SK-N-SH (cell line): ENCODE measurements at regions of chr7 and their contacts with region 1.

Region 1: DNA sequence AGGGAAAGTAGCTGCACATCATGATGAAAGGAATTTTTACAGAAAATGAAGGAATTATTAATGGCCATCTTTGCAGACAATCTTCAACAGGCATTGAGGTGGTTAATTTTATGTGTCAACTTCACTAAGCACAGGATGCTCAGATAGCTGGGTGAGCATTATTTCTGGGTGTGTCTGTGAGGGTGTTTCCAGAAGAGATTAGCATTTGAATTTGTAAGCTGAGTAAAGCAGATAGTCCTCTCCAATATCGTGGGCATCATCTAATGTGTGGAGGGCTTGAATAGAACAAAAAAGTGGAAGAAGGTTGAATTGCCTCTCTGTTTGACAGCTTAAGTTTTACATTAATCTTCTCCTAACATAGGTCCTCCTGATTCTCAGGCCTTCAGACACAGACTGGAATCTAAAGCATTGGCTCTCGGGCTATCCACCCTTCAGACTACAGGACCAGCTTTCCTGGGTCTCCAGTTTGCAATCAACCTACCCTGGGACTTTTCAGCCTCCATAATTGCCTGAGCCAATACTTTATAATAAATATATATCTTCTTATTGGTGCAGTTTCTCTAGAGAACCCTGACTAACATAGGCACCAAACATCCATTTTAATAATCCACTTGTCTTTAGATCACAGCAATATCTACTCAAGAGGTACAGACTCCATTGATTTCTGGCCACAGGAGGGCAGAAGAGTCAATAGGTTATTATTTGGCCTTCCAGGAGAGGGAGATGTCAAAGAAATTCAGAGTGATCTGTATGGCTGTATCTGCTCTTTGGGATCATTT is 10.5 kb upstream of the CRPPA start:
- DNase-seq: peak; percentile 34
- H3K4me3 ChIP-seq: no peak overlapping the region
- H3K27ac ChIP-seq: no peak overlapping the region
- H3K4me1 ChIP-seq: no peaks in the 10 kb centered on the region; a peak in 2 of 4 replicates
- H3K27me3 ChIP-seq: no peaks in the 10 kb centered on the region
- CTCF ChIP-seq: peak; percentile 67
- EP300 ChIP-seq: no peak
- RAD21 ChIP-seq: peak; percentile 81

Region 2: DNA sequence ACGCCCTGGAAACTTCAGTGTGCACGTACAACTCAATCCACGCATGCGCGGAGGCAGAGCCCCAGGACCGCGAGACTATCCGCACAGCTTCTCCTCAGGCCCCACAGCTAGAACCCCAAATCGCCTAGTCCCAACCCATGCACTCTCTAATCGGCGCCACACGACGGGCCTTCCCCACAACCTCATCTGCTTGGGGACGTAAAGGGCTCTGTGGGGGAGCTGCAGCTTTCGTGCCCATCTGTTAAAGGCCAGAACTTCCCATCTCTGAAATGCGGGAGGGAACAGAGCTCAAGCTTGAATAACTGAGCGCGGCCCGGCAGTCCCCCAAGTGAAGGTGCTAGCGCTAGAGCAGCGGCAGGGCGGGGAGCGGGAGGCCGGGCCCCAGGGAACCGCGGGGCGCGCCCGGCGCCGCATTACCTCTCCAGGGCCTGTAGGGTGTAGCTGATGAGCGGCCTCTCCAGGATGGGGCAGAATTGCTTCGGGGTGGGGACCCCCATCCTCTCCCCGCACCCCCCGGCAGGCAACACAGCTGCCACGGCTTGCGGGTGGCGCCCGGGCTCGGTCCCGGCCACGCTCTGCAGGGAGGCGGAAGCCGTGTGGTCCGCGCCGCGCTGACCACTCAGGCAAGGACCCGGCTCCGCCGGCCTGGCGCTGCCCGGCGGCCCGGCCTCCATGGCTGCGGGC is 11.0 kb before region 1 on chr7:
- CTCF ChIA-PET with region 1: interaction called, 56 read pairs
- POLR2A ChIA-PET with region 1: interaction called, 11 read pairs
- DNase-seq: peak; percentile 88
- H3K4me3 ChIP-seq: peak overlapping the region; percentile 59
- H3K27ac ChIP-seq: peak overlapping the region; percentile 69 to 95
- H3K4me1 ChIP-seq: peaks cover 0 to 15% of the 10 kb centered on the region in 2 experiments; a peak in 1 of 4 replicates
- H3K27me3 ChIP-seq: no peaks in the 10 kb centered on the region
- CTCF ChIP-seq: peak; percentile 38
- EP300 ChIP-seq: no peak
- RAD21 ChIP-seq: peak; percentile 33

Region 3: GRCh38 chr7:16450366-16450765 is 18.5 kb after region 1 on chr7:
- CTCF ChIA-PET with region 1: interaction called, 26 read pairs
- POLR2A ChIA-PET with region 1: no interaction called
- DNase-seq: no peak
- H3K4me3 ChIP-seq: no peak overlapping the region
- H3K27ac ChIP-seq: no peak overlapping the region
- H3K4me1 ChIP-seq: no peaks in the 10 kb centered on the region; a peak in 1 of 4 replicates
- H3K27me3 ChIP-seq: no peaks in the 10 kb centered on the region; the same call in 1 of the 2 replicates
- CTCF ChIP-seq: no peak
- EP300 ChIP-seq: no peak
- RAD21 ChIP-seq: no peak